ENCODE measurements at regions of chr7 and their contacts with region 1.

Region 1: GRCh38 chr7:121329191-121330052 is 622 bp downstream of the WNT16 start:
- DNase-seq: peak; percentile 43
- ATAC-seq: peak; percentile 49
- H3K4me3 Mint-ChIP-seq: peak overlapping the region; percentile 91
- H3K27ac Mint-ChIP-seq: peak overlapping the region; percentile 85
- H3K4me1 Mint-ChIP-seq: peaks cover 36% of the 10 kb centered on the region
- H3K27me3 Mint-ChIP-seq: peaks cover 11% of the 10 kb centered on the region
- CTCF ChIP-seq: no peak

Region 2: GRCh38 chr7:121061677-121062582 is 267.5 kb before region 1 on chr7:
- CTCF ChIA-PET with region 1: no interaction called
- POLR2A ChIA-PET with region 1: no interaction called
- intact Hi-C with region 1: no loop called
- DNase-seq: no peak
- ATAC-seq: no peak
- H3K4me3 Mint-ChIP-seq: no peak overlapping the region
- H3K27ac Mint-ChIP-seq: no peak overlapping the region
- H3K4me1 Mint-ChIP-seq: no peaks in the 10 kb centered on the region
- H3K27me3 Mint-ChIP-seq: no peaks in the 10 kb centered on the region
- CTCF ChIP-seq: no peak

Region 3: DNA sequence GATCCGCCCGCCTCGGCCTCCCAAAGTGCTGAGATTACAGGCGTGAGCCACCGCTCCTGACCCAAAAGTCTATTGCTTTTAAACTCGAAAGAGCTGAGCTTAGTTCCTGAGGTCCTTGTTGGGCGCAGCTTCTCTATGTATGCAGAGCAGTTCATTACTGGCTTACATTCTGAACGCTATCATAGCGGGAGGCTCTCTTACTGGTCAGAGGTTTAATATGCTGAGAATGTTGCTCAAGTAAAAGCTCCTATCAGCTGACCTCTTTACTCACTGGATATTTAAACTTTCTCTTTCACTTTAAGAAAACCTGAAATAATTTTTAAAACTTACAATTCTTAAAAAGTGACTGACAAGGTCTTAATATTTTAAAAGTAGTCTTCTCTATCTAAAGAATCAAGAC is 161.5 kb before region 1 on chr7:
- CTCF ChIA-PET with region 1: interaction called, 7 read pairs
- POLR2A ChIA-PET with region 1: interaction called, 9 read pairs
- intact Hi-C with region 1: loop called (anchors 1 kb)
- DNase-seq: no peak
- ATAC-seq: no peak
- H3K4me3 Mint-ChIP-seq: no peak overlapping the region
- H3K27ac Mint-ChIP-seq: no peak overlapping the region
- H3K4me1 Mint-ChIP-seq: peaks cover 44% of the 10 kb centered on the region
- H3K27me3 Mint-ChIP-seq: no peaks in the 10 kb centered on the region
- CTCF ChIP-seq: no peak

Region 4: DNA sequence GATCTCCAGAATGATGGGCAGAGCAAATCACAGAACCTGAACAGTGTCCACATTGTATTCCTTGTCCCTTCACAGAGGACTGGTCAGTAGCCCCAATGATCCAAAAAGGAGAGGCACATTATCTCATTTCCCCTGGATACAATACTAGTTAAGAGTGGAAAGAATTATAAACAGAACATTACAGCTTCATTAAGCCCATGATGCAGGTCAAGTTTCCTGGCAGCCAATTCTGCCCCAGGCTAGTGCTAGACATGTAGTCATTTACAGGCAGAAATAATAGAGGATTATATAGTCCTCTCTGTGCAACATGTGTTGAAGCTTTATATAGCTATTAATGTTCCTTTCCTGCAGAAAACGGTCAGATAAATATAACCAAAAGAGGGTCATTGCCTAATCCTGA is 124.9 kb before region 1 on chr7:
- CTCF ChIA-PET with region 1: no interaction called
- POLR2A ChIA-PET with region 1: no interaction called
- intact Hi-C with region 1: no loop called
- DNase-seq: no peak
- ATAC-seq: no peak
- H3K4me3 Mint-ChIP-seq: no peak overlapping the region
- H3K27ac Mint-ChIP-seq: no peak overlapping the region
- H3K4me1 Mint-ChIP-seq: peaks cover 42% of the 10 kb centered on the region
- H3K27me3 Mint-ChIP-seq: no peaks in the 10 kb centered on the region
- CTCF ChIP-seq: no peak